Head of caudate nucleus (tissue), 42 donors: ENCODE measurements at regions of chr5 and their contacts with region 1.

Region 1: DNA sequence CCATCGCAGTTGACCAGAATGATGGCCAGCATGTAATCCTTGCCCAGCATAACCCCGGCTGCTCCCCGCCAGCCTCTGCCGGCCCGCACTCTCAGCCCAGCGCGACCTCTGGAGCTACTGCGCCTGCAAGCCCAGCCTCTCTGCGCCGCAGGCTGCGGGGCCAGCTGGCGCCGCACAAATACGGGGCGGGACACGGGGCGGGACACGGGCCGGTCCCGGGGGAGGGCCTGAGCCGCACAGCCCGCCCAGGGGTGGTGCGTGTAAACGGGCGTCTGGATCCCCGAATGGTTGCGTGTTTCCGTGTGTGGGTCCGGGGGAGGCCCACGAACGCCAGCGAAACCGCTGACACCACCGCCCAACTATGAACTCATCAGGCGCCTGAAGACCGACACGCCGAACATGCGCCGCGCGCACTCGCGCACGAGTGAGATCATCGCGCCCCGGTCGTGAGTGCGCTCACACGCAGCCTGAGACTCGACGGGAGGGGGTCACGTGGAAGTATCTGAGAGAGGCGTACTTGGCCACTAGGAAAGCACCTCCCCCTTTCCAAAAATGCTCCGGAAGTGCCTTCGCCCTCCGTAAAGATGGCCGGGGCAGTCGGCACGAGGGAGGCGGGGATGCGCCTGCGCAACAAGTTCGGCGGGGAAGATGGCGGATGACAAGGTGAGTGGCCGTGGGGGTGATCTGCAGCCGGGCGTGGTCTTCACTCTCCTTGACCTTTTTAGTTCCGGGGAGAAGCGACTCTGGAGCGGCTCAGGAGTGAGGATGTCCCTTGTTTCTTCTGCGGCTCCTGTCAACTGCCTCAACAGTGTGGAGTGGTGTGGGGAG is at the starts of genes APBB3 and SLC35A4:
- DNase-seq: peak; percentile 94 to 99 (median 98)

Region 2: GRCh38 chr5:140502834-140503233 is 61.6 kb before region 1 on chr5:
- intact Hi-C with region 1: no loop called
- DNase-seq: no peak

Region 3: DNA sequence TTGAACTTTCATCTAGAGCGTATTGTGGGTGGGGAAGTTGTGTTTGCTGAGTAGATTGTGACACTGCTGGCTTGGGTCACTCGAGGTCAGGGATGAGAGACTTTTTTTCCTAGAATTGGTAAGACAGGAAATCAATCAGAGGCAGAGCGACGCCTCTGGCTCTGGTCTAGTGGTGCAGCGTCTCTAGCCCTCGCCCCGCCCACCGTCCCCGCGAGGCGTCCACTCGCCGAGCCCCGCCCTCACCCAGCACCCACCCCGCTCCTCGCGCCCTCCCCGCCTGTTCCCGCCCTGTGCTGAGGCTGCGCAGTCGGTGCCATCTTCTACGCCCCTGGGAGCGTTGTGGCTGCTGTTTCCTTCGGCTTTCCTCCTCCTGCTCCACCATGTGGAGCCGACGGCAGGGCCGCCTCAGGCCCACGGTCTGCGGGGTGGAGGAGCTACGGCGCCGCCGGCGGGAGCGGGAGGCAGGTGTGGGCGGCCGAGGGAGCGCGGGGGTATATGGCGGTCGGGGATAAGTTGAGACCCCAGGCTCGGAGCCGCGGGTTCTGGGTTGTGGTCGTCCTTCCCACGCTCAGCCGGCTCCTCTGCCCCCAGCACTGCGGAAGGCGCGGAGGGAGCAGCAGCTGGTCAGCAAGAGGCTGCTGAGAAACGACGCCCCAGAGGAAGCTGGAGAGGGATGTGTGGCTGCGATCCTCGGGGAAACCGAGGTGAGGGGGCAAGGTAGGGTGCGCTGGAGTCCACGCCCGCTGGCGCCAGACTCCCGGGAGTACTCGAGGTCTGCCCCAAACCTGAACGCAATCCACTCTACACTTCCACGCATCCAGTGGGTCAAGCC is 75.0 kb after region 1 on chr5 and contains the start of gene TMCO6:
- intact Hi-C with region 1: loop called (anchors 5 kb)
- DNase-seq: peak; percentile 94 to 99 (median 98)

Region 4: GRCh38 chr5:140647042-140647341 is 82.6 kb after region 1 on chr5:
- intact Hi-C with region 1: loop called (anchors 5 kb)
- DNase-seq: no peak

Region 5: GRCh38 chr5:140690941-140691924 is 126.8 kb after region 1 on chr5 and contains the starts of genes HARS1 and HARS2:
- intact Hi-C with region 1: loop called (anchors 10 kb)
- DNase-seq: peak; percentile 88 to 97 (median 94)